Ovary (tissue), 10 donors: ENCODE measurements at regions of chr5 and their contacts with region 1.

Region 1: GRCh38 chr5:3891113-3891512 is 295.5 kb downstream of the IRX1 start:
- DNase-seq: no peak
- H3K4me3 ChIP-seq: no peak overlapping the region
- H3K27ac ChIP-seq: no peak overlapping the region
- H3K4me1 ChIP-seq: no peaks in the 10 kb centered on the region
- H3K27me3 ChIP-seq: no peaks in the 10 kb centered on the region
- CTCF ChIP-seq: no peak
- EP300 ChIP-seq: no peak
- POLR2A ChIP-seq: no peak

Region 2: DNA sequence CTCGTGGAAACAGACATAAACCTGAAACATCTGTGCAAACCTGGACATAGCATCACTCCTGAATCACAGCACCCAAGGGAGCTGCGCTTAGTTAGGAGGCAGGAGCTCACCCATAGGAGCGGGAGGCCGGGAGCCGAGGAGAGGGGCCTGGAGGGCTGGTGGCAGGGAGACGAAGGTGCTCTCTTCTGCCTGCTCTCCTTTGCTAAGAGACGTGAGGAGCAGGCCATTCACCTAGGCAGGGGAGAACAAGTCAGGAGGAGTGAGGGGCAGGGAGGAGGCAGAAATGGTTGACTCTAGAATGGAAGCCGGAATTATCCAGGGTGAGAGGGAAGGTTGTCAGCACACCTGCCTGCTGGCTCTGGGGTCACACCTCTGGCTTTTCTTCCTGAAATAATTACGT is 741.2 kb before region 1 on chr5:
- intact Hi-C with region 1: loop called in 1 of 4 experiments (anchors 5 kb)
- DNase-seq: no peak
- H3K4me3 ChIP-seq: no peak overlapping the region
- H3K27ac ChIP-seq: no peak overlapping the region
- H3K4me1 ChIP-seq: no peaks in the 10 kb centered on the region
- H3K27me3 ChIP-seq: no peaks in the 10 kb centered on the region
- CTCF ChIP-seq: no peak
- EP300 ChIP-seq: no peak
- POLR2A ChIP-seq: no peak

Region 3: GRCh38 chr5:3740546-3741373 is 150.4 kb before region 1 on chr5:
- intact Hi-C with region 1: no loop called
- DNase-seq: no peak
- H3K4me3 ChIP-seq: no peak overlapping the region
- H3K27ac ChIP-seq: no peak overlapping the region
- H3K4me1 ChIP-seq: no peaks in the 10 kb centered on the region
- H3K27me3 ChIP-seq: no peaks in the 10 kb centered on the region
- CTCF ChIP-seq: no peak
- EP300 ChIP-seq: no peak
- POLR2A ChIP-seq: no peak

Region 4: GRCh38 chr5:3862906-3863305 is 28.2 kb before region 1 on chr5:
- intact Hi-C with region 1: no loop called
- DNase-seq: no peak
- H3K4me3 ChIP-seq: no peak overlapping the region
- H3K27ac ChIP-seq: no peak overlapping the region
- H3K4me1 ChIP-seq: no peaks in the 10 kb centered on the region
- H3K27me3 ChIP-seq: no peaks in the 10 kb centered on the region
- CTCF ChIP-seq: no peak
- EP300 ChIP-seq: no peak
- POLR2A ChIP-seq: no peak

Region 5: DNA sequence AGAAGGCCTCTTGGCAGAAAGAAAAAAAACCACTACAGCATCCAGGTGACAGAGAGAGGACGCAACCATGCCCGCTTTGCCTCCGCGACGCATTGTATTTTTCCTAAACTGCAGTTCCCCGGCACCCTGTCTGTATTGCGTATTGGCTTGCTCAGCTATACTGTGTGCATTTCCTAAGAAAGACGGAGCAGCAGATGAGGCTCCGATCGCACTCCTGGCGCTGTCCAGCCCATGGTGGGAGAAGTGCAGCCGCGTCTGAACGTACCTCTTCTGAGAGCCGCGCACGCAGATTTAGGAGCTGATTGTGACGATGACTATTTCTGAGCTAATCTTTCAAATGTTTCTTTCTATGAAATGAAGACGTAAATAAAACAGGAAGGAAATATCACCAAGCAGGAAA is 71.0 kb after region 1 on chr5:
- intact Hi-C with region 1: no loop called
- DNase-seq: no peak
- H3K4me3 ChIP-seq: no peak overlapping the region
- H3K27ac ChIP-seq: no peak overlapping the region
- H3K4me1 ChIP-seq: no peaks in the 10 kb centered on the region
- H3K27me3 ChIP-seq: no peaks in the 10 kb centered on the region
- CTCF ChIP-seq: no peak
- EP300 ChIP-seq: no peak
- POLR2A ChIP-seq: no peak

Region 6: DNA sequence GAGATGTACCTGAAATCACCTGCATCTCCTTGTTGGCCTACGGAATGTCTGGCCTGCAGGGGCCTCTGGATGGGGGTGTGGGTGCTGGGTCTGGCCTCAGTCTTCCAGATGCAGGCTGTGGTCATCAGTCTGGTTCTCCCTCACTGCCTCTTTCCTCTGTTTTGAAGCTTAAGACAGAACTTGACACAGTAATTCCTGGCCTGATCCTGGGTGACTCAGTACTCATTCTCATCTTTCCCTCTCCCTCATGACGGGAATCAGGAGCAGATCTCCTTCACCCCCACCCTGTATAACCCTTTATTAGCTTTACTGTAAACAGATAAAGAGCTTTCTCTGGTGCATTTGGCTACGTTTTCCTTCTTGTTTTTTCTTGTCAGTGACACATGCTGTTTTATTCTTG is 1159.7 kb after region 1 on chr5:
- intact Hi-C with region 1: no loop called
- DNase-seq: no peak
- H3K4me3 ChIP-seq: no peak overlapping the region
- H3K27ac ChIP-seq: no peak overlapping the region
- H3K4me1 ChIP-seq: no peaks in the 10 kb centered on the region
- H3K27me3 ChIP-seq: no peaks in the 10 kb centered on the region
- CTCF ChIP-seq: no peak
- EP300 ChIP-seq: no peak
- POLR2A ChIP-seq: no peak